OCI-LY7 (cell line): ENCODE measurements at regions of chr1 and their contacts with region 1.

Region 1: GRCh38 chr1:178749581-178750166 is 24.6 kb downstream of the RALGPS2 start:
- DNase-seq: no peak
- H3K4me3 ChIP-seq: peak overlapping the region; percentile 40
- H3K27ac ChIP-seq: peak overlapping the region; percentile 71
- H3K4me1 ChIP-seq: peaks cover 47% of the 10 kb centered on the region
- CTCF ChIP-seq: no peak

Region 2: GRCh38 chr1:178733972-178734371 is 15.7 kb before region 1 on chr1:
- CTCF ChIA-PET with region 1: no interaction called
- POLR2A ChIA-PET with region 1: interaction called, 15 read pairs
- intact Hi-C with region 1: no loop called
- DNase-seq: no peak
- H3K4me3 ChIP-seq: no peak overlapping the region
- H3K27ac ChIP-seq: no peak overlapping the region
- H3K4me1 ChIP-seq: peaks cover 3% of the 10 kb centered on the region
- CTCF ChIP-seq: peak; percentile 57

Region 3: GRCh38 chr1:179251675-179252074 is 502.0 kb after region 1 on chr1:
- CTCF ChIA-PET with region 1: no interaction called
- POLR2A ChIA-PET with region 1: no interaction called
- intact Hi-C with region 1: no loop called
- DNase-seq: peak; percentile 25
- H3K4me3 ChIP-seq: no peak overlapping the region
- H3K27ac ChIP-seq: no peak overlapping the region
- H3K4me1 ChIP-seq: no peaks in the 10 kb centered on the region
- CTCF ChIP-seq: peak; percentile 63